ENCODE measurements at regions of chr7 and their contacts with region 1.

Region 1: DNA sequence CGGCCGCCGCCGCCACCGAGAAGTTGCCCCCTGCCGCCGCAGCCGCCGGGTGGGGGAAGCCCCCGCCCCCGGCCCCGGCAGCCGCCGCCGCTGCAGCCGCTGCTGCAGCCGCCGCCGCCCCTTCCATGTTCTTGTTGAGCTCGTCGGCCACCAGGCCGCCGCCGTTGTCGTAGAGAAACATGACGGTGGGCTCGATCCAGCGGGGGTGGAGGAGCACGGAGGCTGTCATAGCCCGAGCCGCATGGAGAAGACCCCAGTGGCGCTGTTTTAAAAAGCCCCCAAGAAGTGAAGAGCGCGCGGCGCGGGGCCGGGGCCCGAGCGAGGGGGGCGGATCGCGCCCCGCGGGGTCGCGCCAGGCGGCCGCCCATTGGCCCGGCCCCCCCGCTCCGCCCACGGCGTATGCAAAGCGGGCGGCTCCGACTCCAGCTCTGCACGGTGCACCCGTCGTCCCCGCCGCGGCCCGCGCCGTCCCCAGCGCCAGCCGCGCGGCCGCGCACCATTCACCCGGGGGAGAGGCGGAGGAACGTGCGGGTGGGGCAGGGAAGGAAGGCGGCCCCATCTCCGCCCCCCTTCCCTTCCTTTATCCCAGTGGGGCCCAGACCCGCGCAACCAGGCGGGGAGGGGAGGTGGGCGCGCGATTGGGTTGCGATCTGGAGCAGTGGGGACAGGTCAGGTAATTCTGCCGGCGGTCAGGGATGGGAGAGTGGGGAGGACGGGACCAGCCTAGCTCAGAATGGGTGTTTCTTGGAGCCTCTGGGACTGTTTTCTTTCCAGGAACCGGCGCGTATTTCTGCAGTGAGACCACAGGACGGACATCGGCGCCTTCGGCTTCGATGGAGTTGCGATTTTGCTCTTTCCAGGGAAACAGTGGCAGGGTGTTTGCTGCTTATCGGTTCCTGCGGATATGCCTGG is at the start of gene HOXA13:
- DNase-seq: no peak
- ATAC-seq: peak in 2 of 4 donors; percentile 35 to 44
- H3K4me3 ChIP-seq: no peak within 1 kb of the TSS
- H3K27ac ChIP-seq: no peak within 1 kb of the TSS
- H3K4me1 ChIP-seq: peaks cover 0 to 20% (median 5%) of the 10 kb centered on the region in 4 donors
- H3K27me3 ChIP-seq: peaks cover 29 to 64% of the 10 kb centered on the region in 2 donors
- CTCF ChIP-seq: no peak
- POLR2A ChIP-seq: no peak
- total RNA-seq, gene HOXA13: not detected

Region 2: GRCh38 chr7:27641581-27642230 is 441.6 kb after region 1 on chr7:
- intact Hi-C with region 1: no loop called
- DNase-seq: no peak
- ATAC-seq: peak; percentile 85 to 88 (median 86)
- H3K4me3 ChIP-seq: peak overlapping the region in 1 of 3 donors; percentile 22
- H3K27ac ChIP-seq: peak overlapping the region; percentile 41 to 85 (median 65)
- H3K4me1 ChIP-seq: peaks cover 0 to 17% (median 8%) of the 10 kb centered on the region in 4 donors
- H3K27me3 ChIP-seq: no peaks in the 10 kb centered on the region
- CTCF ChIP-seq: no peak
- POLR2A ChIP-seq: no peak

Region 3: GRCh38 chr7:28020302-28020940 is 820.3 kb after region 1 on chr7:
- intact Hi-C with region 1: loop called in 1 of 2 experiments (anchors 10 kb)
- DNase-seq: peak; percentile 38 to 57 (median 55)
- ATAC-seq: peak; percentile 97 to 99 (median 97)
- H3K4me3 ChIP-seq: no peak overlapping the region
- H3K27ac ChIP-seq: no peak overlapping the region
- H3K4me1 ChIP-seq: no peaks in the 10 kb centered on the region
- H3K27me3 ChIP-seq: no peaks in the 10 kb centered on the region
- CTCF ChIP-seq: peak; percentile 82 to 90 (median 86)
- POLR2A ChIP-seq: no peak